Activated CD4-positive, alpha-beta memory T cell treated with anti-CD3 and anti-CD28 coated beads for 36 hours (primary cell): ENCODE measurements at regions of chr1 and their contacts with region 1.

Region 1: DNA sequence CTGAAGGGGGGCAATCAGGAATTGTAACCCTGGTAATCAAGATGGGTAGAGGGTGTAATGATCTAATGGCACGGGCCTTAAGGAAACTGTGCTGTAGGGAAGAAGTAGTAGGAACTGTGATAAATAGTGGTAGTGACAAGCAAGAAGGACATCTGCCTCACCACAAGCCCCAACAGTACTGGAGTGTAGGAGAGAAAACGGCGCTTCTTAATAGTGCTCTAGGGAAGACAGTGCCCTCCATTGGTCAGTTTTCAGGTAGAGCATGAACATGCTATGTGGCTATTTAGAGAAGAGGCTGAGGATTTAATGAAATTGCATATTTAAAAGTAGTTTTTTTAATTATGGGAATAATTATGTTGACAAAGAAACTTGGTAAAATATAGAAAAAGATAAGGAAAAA is 32.2 kb downstream of the SLC30A7 start:
- DNase-seq: no peak
- H3K4me3 Mint-ChIP-seq: no peak overlapping the region
- H3K27ac Mint-ChIP-seq: no peak overlapping the region
- H3K4me1 Mint-ChIP-seq: peaks cover 58% of the 10 kb centered on the region
- H3K27me3 Mint-ChIP-seq: no peaks in the 10 kb centered on the region

Region 2: GRCh38 chr1:100132566-100133477 is 795.3 kb before region 1 on chr1 and contains the starts of genes SASS6 and TRMT13:
- CTCF ChIA-PET with region 1: no interaction called
- POLR2A ChIA-PET with region 1: no interaction called
- intact Hi-C with region 1: no loop called
- DNase-seq: peak; percentile 97
- H3K4me3 Mint-ChIP-seq: peak within 1 kb of the TSS; percentile 96
- H3K27ac Mint-ChIP-seq: peak within 1 kb of the TSS; percentile 93
- H3K4me1 Mint-ChIP-seq: peaks cover 39% of the 10 kb centered on the region
- H3K27me3 Mint-ChIP-seq: no peaks in the 10 kb centered on the region
- total RNA-seq, gene SASS6: 11.5 to 12.0 TPM
- total RNA-seq, gene TRMT13: 17.5 TPM

Region 3: GRCh38 chr1:100941098-100941527 is 13.0 kb after region 1 on chr1:
- CTCF ChIA-PET with region 1: interaction called, 3 read pairs
- POLR2A ChIA-PET with region 1: no interaction called
- intact Hi-C with region 1: loop called (anchors 1 kb)
- DNase-seq: peak; percentile 67
- H3K4me3 Mint-ChIP-seq: peak overlapping the region; percentile 77
- H3K27ac Mint-ChIP-seq: peak overlapping the region; percentile 92
- H3K4me1 Mint-ChIP-seq: peaks cover 39% of the 10 kb centered on the region
- H3K27me3 Mint-ChIP-seq: peaks cover 3% of the 10 kb centered on the region

Region 4: DNA sequence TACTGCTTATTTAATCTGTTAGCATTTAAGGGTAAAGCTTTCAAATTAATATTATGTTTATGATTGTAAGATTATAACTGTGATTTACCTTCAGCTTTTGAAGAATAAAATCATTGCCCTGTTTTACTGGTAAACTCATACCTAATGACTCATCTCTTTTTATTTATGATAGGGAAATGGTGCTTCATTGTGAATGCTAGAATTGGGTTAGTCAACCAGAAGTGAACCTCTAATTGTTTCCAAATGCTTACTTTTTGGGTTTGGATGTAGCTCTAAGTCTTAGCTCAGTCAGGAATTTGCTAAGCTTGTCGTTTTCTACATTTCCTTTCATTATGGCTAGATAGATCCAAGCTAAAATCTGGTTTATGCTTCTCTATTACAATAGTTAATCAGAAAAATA is 27.2 kb after region 1 on chr1:
- CTCF ChIA-PET with region 1: interaction called, 6 read pairs
- POLR2A ChIA-PET with region 1: interaction called, 3 read pairs
- intact Hi-C with region 1: loop called (anchors 2 kb)
- DNase-seq: no peak
- H3K4me3 Mint-ChIP-seq: no peak overlapping the region
- H3K27ac Mint-ChIP-seq: peak overlapping the region; percentile 56
- H3K4me1 Mint-ChIP-seq: peaks cover 48% of the 10 kb centered on the region
- H3K27me3 Mint-ChIP-seq: no peaks in the 10 kb centered on the region

Region 5: DNA sequence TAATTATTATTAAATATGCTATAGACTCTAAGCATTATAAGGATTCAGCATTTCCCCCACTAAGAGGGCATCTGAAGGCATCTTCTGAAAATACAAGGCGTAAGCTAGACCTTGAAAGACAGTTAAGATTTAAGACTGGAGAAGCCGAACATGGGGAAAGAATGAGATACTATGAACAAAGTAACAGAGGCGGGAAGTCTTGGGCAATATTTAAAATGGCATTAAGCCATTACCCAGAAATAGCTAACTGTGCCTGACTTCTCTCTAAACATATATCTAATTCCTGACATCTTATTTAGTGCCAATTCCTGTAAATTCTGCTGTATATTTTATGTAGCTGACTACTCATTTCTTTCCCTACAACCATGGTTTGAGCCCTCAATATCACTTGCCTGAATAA is 76.5 kb after region 1 on chr1:
- CTCF ChIA-PET with region 1: no interaction called
- POLR2A ChIA-PET with region 1: no interaction called
- intact Hi-C with region 1: loop called (anchors 5 kb)
- DNase-seq: no peak
- H3K4me3 Mint-ChIP-seq: no peak overlapping the region
- H3K27ac Mint-ChIP-seq: no peak overlapping the region
- H3K4me1 Mint-ChIP-seq: peaks cover 56% of the 10 kb centered on the region
- H3K27me3 Mint-ChIP-seq: no peaks in the 10 kb centered on the region